Mammary epithelial cell (primary cell): ENCODE measurements at regions of chr9 and their contacts with region 1.

Region 1: DNA sequence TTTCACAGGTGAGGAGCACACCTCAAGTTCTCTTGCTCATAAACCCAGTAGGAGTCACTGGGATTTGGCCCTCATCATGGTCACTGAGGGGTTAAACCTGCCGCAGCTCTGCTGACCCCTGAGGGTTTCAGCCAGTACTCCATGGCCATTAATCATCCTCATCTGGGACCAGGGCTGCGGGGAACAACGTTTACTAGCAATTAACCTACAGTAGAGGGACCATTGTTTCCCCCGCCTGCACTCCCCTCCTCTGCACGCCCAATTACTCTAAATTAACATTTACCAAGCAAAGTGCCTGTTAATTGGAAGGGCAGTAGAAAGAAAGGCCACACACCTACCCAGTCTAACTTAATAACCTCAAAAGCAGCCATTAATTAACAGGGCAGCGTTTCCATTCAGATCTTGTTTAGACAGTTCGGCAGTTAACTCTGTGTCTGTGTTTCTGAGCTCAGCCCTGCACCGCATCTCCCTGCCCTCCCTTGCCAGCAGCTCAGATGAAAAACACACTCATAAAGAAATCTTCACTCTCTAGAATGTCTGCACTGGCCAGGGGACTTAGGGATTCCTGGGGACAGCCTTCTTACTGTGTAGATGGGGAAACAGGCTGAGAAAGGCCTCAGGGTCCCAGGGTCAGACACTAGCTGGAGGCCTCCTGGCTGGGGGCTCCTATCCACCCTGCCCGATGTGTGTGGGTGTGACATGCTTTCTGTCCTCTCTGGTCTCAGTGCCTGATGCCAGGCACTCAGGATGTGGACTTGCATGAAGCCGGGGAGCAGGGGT is 51.6 kb downstream of the ALG2 start:
- DNase-seq: no peak
- H3K4me3 ChIP-seq: no peak overlapping the region
- H3K27ac ChIP-seq: no peak overlapping the region
- H3K4me1 ChIP-seq: no peaks in the 10 kb centered on the region
- H3K27me3 ChIP-seq: no peaks in the 10 kb centered on the region
- CTCF ChIP-seq: no peak

Region 2: GRCh38 chr9:99184475-99185347 is 14.5 kb after region 1 on chr9:
- CTCF ChIA-PET with region 1: no interaction called
- dilution Hi-C with region 1: no loop called
- in situ Hi-C with region 1: no loop called
- intact Hi-C with region 1: no loop called
- DNase-seq: peak; percentile 77
- H3K4me3 ChIP-seq: no peak overlapping the region
- H3K27ac ChIP-seq: no peak overlapping the region
- H3K4me1 ChIP-seq: no peaks in the 10 kb centered on the region
- H3K27me3 ChIP-seq: no peaks in the 10 kb centered on the region
- CTCF ChIP-seq: peak; percentile 95

Region 3: GRCh38 chr9:100322954-100323536 is 1152.9 kb after region 1 on chr9:
- CTCF ChIA-PET with region 1: no interaction called
- dilution Hi-C with region 1: no loop called
- in situ Hi-C with region 1: no loop called
- intact Hi-C with region 1: loop called (anchors 5 kb)
- DNase-seq: peak; percentile 20
- H3K4me3 ChIP-seq: no peak overlapping the region
- H3K27ac ChIP-seq: no peak overlapping the region
- H3K4me1 ChIP-seq: peaks cover 3% of the 10 kb centered on the region
- H3K27me3 ChIP-seq: no peaks in the 10 kb centered on the region
- CTCF ChIP-seq: peak; percentile 59 to 63